Activated T-helper 2 cell treated with anti-CD3 and anti-CD28 coated beads, Interferon-gamma antibody, Interleukin-2, Interleukin-4, amounts not matched to agents 10 μg/mL and 5 μg/mL and 100 μg/mL, durations not matched to agents 14 hours and 24 hours and 36 hours (primary cell): ENCODE measurements at regions of chr1 and their contacts with region 1.

Region 1: GRCh38 chr1:32247983-32248889 is 1.2 kb downstream of the FAM167B start:
- DNase-seq: peak; percentile 74
- H3K4me3 Mint-ChIP-seq: peak overlapping the region; percentile 66
- H3K27ac Mint-ChIP-seq: peak overlapping the region; percentile 100
- H3K4me1 Mint-ChIP-seq: peaks cover 40% of the 10 kb centered on the region
- H3K27me3 Mint-ChIP-seq: no peaks in the 10 kb centered on the region

Region 2: DNA sequence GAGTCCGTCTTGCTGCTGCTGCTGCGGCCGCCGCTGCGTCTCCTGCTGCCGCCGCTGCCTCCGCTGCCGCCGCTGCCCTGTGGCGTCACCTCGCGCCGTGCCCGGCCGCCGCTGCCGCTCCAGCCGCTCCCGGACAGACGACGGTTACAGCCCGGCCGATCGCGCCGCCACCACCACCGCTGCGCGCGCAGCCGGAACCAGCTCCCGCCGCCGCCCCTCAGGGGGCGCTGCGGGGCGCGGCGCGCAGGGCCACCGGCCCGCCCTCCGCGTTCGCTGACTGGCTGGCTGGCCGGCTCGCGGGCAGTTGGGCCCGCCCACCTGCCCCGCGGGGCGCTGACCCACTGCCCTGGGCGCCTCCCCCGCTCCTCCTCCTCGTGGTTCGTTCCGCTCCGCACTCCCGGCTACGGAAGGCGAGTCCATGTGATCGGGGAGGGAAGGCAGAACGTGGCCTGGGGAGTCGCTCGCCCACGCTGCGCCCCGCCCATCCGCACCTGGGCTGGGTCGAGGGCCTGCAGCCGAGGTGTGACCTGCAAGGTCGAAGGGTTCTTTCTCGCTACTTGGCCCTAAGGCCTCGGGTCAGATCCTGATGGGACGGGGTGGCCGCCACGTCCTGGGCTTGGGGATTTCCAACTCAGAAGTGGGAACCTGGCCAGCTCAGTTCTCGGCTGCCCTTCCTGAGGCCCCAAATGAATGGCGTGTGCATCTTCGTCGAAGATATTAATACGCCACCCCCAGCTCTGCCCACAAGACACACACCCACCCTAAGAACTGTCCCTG is 309.9 kb before region 1 on chr1 and contains the start of gene PTP4A2:
- intact Hi-C with region 1: loop called (anchors 5 kb)
- DNase-seq: peak; percentile 85
- H3K4me3 Mint-ChIP-seq: peak within 1 kb of the TSS; percentile 95
- H3K27ac Mint-ChIP-seq: peak within 1 kb of the TSS; percentile 92
- H3K4me1 Mint-ChIP-seq: peaks cover 53% of the 10 kb centered on the region
- H3K27me3 Mint-ChIP-seq: no peaks in the 10 kb centered on the region
- total RNA-seq, gene PTP4A2: 313 and 334 TPM in 2 replicates

Region 3: GRCh38 chr1:32179443-32180185 is 68.6 kb before region 1 on chr1 and contains the start of gene TXLNA:
- intact Hi-C with region 1: loop called (anchors 5 kb)
- DNase-seq: peak; percentile 87
- H3K4me3 Mint-ChIP-seq: peak within 1 kb of the TSS; percentile 97
- H3K27ac Mint-ChIP-seq: peak within 1 kb of the TSS; percentile 98
- H3K4me1 Mint-ChIP-seq: peaks cover 34% of the 10 kb centered on the region
- H3K27me3 Mint-ChIP-seq: no peaks in the 10 kb centered on the region
- total RNA-seq, gene TXLNA: 98.6 and 101 TPM in 2 replicates

Region 4: GRCh38 chr1:32200226-32201010 is 47.8 kb before region 1 on chr1 and contains the start of gene CCDC28B:
- intact Hi-C with region 1: loop called (anchors 5 kb)
- DNase-seq: peak; percentile 49
- H3K4me3 Mint-ChIP-seq: peak within 1 kb of the TSS; percentile 80
- H3K27ac Mint-ChIP-seq: peak within 1 kb of the TSS; percentile 93
- H3K4me1 Mint-ChIP-seq: peaks cover 57% of the 10 kb centered on the region
- H3K27me3 Mint-ChIP-seq: no peaks in the 10 kb centered on the region
- total RNA-seq, gene CCDC28B: 39.1 and 44.0 TPM in 2 replicates

Region 5: DNA sequence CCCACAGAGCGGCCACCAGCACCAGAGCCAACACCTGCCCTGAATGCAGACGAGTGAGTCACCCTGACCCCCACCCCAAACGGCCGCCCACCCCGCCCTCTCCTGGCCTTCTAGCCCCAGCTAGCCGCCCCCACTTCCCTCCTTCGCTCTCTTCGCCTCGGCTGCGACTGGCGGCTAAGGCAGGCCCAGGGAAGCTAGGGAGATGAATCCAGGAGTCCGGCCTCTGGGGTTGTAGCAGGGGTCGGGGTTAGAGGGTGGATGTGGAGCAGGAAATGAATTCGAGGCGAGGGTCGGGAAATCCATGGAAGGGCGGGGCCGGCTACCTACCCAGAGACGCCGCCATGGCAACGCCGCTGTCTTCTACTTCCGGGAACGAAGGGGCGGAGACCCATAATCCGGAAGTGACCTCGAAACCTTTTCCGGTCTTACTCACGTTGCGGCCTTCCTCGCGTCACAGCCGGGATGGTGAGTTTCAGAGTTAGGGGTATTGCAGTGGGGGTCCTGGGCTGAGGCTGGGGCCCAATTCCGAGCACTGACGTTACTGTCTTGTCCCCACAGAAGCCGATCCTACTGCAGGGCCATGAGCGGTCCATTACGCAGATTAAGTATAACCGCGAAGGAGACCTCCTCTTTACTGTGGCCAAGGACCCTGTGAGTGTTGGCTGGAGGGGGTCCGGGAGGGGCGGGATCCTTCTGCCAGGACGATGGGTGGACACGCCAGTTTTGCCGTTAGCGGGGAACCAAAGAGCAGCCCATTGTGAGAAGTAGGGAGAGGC is 26.1 kb before region 1 on chr1 and contains the starts of genes EIF3I and TMEM234:
- intact Hi-C with region 1: loop called (anchors 2 kb)
- DNase-seq: peak; percentile 88
- H3K4me3 Mint-ChIP-seq: peak within 1 kb of the TSS; percentile 94
- H3K27ac Mint-ChIP-seq: peak within 1 kb of the TSS; percentile 95
- H3K4me1 Mint-ChIP-seq: peaks cover 28% of the 10 kb centered on the region
- H3K27me3 Mint-ChIP-seq: no peaks in the 10 kb centered on the region
- total RNA-seq, gene EIF3I: 287 and 293 TPM in 2 replicates
- total RNA-seq, gene TMEM234: 10.7 and 12.1 TPM in 2 replicates

Region 6: GRCh38 chr1:32263744-32264143 is 15.5 kb after region 1 on chr1:
- intact Hi-C with region 1: loop called (anchors 1 kb)
- DNase-seq: no peak
- H3K4me3 Mint-ChIP-seq: peak overlapping the region; percentile 17
- H3K27ac Mint-ChIP-seq: peak overlapping the region; percentile 61
- H3K4me1 Mint-ChIP-seq: peaks cover 37% of the 10 kb centered on the region
- H3K27me3 Mint-ChIP-seq: no peaks in the 10 kb centered on the region

Region 7: DNA sequence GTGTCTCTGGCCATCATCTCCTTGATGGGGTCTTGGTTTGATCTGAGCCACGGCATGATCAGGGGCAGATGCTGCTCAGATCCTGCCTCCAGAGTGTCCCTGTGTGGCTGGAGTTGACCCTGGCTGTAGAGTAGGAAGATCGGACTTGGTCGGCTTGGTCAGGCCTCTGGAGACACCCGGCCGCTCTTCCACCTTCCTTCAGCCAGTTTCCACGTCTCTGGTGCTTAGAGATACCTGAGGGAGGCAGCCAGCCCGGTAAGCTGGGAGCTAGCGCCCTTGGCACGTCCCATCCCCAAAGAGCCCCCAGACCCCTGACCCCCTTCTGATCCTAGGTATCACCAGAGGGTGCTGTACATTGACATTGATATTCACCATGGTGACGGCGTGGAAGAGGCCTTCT is 79.0 kb after region 1 on chr1:
- intact Hi-C with region 1: no loop called
- DNase-seq: no peak
- H3K4me3 Mint-ChIP-seq: no peak overlapping the region
- H3K27ac Mint-ChIP-seq: no peak overlapping the region
- H3K4me1 Mint-ChIP-seq: peaks cover 23% of the 10 kb centered on the region
- H3K27me3 Mint-ChIP-seq: no peaks in the 10 kb centered on the region